T-cell (primary cell): ENCODE measurements at regions of chr11 and their contacts with region 1.

Region 1: GRCh38 chr11:3091791-3092602 is 34.8 kb upstream of the CARS1 start:
- DNase-seq: peak; percentile 22 to 84 (median 58)
- ATAC-seq: peak; percentile 80 to 90 (median 86)
- H3K4me3 ChIP-seq: no peak overlapping the region
- H3K4me3 Mint-ChIP-seq: no peak overlapping the region
- H3K27ac ChIP-seq: no peak overlapping the region
- H3K27ac Mint-ChIP-seq: no peak overlapping the region
- H3K4me1 ChIP-seq: peaks cover 0 to 7% of the 10 kb centered on the region in 2 experiments
- H3K4me1 Mint-ChIP-seq: peaks cover 0 to 1% (median 0%) of the 10 kb centered on the region in 3 donors
- H3K27me3 ChIP-seq: peaks cover 0 to 34% of the 10 kb centered on the region in 2 experiments
- H3K27me3 Mint-ChIP-seq: peaks cover 0 to 3% of the 10 kb centered on the region in 2 donors

Region 2: DNA sequence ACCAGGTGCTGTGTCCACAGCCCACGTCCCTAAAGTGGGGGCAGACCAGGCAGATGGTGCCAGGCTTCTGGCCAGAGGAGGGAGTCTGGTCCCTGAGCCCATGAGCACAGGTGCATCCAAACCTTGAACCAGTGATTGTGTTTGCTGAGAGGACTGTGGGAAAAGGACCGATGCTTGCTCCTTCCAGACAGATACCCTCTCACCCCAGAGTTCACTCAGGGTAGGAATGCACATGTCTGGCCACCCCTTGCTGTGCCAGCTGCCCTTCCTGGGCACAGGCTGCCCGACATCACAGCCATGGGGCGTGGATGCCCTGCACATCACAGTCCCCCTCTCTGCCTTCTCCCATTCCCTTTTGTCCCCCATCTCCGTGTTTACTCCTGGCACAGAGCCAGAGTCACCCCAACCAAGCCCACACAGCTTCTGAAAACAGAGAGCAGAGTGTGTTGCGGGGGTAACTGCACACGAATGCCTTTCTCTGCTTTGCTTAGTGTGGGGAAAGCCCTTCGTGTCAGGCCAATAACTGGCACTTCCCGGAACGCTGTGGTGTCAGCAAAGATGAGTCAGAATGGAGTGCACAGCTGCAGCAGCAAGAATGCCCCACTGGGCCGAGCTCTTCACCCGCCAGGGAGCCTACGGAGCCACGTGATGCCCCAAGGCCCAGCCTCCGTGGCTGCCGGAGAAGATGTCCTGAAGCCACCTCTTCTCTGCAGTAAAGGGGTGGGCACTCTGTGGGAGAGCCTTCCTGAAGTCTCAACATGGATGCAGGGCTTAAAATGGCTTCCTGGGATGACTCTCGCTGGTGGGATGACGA is 42.4 kb before region 1 on chr11:
- CTCF ChIA-PET with region 1: interaction called in 1 of 2 experiments, 10 read pairs
- POLR2A ChIA-PET with region 1: no interaction called
- DNase-seq: peak; percentile 11 to 87 (median 60)
- ATAC-seq: peak; percentile 83 to 95 (median 90)
- H3K4me3 ChIP-seq: no peak overlapping the region
- H3K4me3 Mint-ChIP-seq: peak overlapping the region in 2 of 3 donors; percentile 51 to 65
- H3K27ac ChIP-seq: peak overlapping the region; percentile 80
- H3K27ac Mint-ChIP-seq: peak overlapping the region; percentile 91 to 93
- H3K4me1 ChIP-seq: peaks cover 0 to 43% of the 10 kb centered on the region in 2 experiments
- H3K4me1 Mint-ChIP-seq: peaks cover 44 to 52% (median 46%) of the 10 kb centered on the region in 3 donors
- H3K27me3 ChIP-seq: no peaks in the 10 kb centered on the region
- H3K27me3 Mint-ChIP-seq: no peaks in the 10 kb centered on the region

Region 3: DNA sequence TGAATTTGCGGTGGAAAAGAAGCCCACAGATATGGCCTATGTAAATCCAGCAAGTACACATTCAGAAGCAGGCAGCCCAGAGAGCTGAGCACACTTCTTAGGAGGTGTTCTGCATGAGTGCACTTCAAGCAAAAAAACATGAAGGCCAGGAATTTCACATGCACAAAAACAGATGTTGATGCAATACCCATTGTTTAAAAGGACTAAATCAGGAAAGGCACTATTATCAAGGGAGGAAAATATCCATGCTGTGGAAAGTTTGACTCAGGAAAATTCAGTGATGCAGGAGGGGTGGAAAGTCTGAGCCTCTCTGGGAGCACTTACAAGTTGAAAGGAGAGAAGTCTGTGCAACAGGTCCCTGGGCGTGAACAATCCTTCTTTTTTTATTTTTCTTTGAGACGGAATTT is 19.0 kb before region 1 on chr11:
- CTCF ChIA-PET with region 1: no interaction called
- POLR2A ChIA-PET with region 1: no interaction called
- DNase-seq: no peak
- ATAC-seq: no peak
- H3K4me3 ChIP-seq: no peak overlapping the region
- H3K4me3 Mint-ChIP-seq: no peak overlapping the region
- H3K27ac ChIP-seq: no peak overlapping the region
- H3K27ac Mint-ChIP-seq: no peak overlapping the region
- H3K4me1 ChIP-seq: no peaks in the 10 kb centered on the region
- H3K4me1 Mint-ChIP-seq: no peaks in the 10 kb centered on the region
- H3K27me3 ChIP-seq: peaks cover 0 to 9% of the 10 kb centered on the region in 2 experiments
- H3K27me3 Mint-ChIP-seq: peaks cover 3 to 12% of the 10 kb centered on the region in 2 donors